ENCODE measurements at regions of chr11 and their contacts with region 1.

Region 1: GRCh38 chr11:124669193-124669592 is 4.3 kb downstream of the SIAE start:
- DNase-seq: peak; percentile 81 to 87

Region 2: DNA sequence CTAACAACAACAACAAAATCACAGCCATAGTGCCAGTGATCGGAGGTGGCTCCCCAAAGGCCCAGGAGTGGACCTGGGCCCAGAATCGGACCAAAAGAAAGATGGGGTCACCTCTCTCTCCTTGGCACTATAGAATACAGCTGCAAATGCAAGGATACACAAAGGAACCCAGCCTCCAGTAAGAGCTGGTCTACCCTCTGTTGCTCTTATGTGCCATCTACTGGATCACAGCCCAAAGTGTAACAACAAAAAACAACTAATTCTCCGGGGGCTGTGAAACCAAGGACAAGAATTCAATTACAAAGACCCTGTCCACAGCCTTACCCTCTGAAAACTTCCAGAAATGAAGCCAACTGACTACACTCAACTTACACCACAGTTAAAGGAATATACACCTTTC is 391.4 kb before region 1 on chr11:
- in situ Hi-C with region 1: no loop called
- DNase-seq: no peak

Region 3: GRCh38 chr11:124837491-124837856 is 168.3 kb after region 1 on chr11:
- in situ Hi-C with region 1: loop called (anchors 10 kb)
- DNase-seq: peak; percentile 79 to 91

Measured in T47D (cell line).